Mammary epithelial cell (primary cell): ENCODE measurements at regions of chr10 and their contacts with region 1.

Region 1: GRCh38 chr10:52883996-52884871 is 111.7 kb upstream of the MBL2 start:
- DNase-seq: peak; percentile 97
- H3K4me3 ChIP-seq: peak overlapping the region; percentile 35 to 54 (median 49)
- H3K27ac ChIP-seq: peak overlapping the region; percentile 81
- H3K4me1 ChIP-seq: peaks cover 23% of the 10 kb centered on the region
- H3K27me3 ChIP-seq: no peaks in the 10 kb centered on the region
- CTCF ChIP-seq: peak; percentile 86 to 87

Region 2: GRCh38 chr10:52864201-52865106 is 19.8 kb before region 1 on chr10:
- CTCF ChIA-PET with region 1: no interaction called
- dilution Hi-C with region 1: no loop called
- in situ Hi-C with region 1: no loop called
- intact Hi-C with region 1: loop called (anchors 2 kb)
- DNase-seq: peak; percentile 98
- H3K4me3 ChIP-seq: no peak overlapping the region
- H3K27ac ChIP-seq: peak overlapping the region; percentile 31
- H3K4me1 ChIP-seq: peaks cover 24% of the 10 kb centered on the region
- H3K27me3 ChIP-seq: no peaks in the 10 kb centered on the region
- CTCF ChIP-seq: no peak

Region 3: DNA sequence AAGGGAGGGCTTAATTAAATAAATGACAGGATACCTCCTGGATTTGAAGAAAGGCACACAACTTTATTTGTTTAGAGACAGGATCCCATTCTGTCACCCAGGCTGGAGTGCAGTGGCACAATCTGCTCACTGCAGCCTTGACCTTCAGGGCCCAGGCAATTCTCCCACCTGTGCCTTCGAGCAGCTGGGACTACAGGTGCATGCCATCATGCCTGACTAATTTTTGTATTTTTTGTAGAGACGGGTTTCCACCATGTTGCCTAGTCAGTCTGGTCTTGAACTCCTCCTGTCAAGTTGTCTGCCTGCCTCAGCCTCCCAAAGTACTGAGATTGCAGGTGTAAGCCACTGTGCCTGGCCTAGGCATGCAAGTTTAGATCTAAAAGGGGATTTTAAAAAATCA is 161.1 kb after region 1 on chr10:
- CTCF ChIA-PET with region 1: no interaction called
- dilution Hi-C with region 1: no loop called
- in situ Hi-C with region 1: no loop called
- intact Hi-C with region 1: no loop called
- DNase-seq: no peak
- H3K4me3 ChIP-seq: no peak overlapping the region
- H3K27ac ChIP-seq: no peak overlapping the region
- H3K4me1 ChIP-seq: no peaks in the 10 kb centered on the region
- H3K27me3 ChIP-seq: no peaks in the 10 kb centered on the region
- CTCF ChIP-seq: no peak

Region 4: GRCh38 chr10:53209944-53210611 is 325.8 kb after region 1 on chr10:
- CTCF ChIA-PET with region 1: no interaction called
- dilution Hi-C with region 1: no loop called
- in situ Hi-C with region 1: no loop called
- intact Hi-C with region 1: loop called (anchors 1 kb)
- DNase-seq: peak; percentile 39
- H3K4me3 ChIP-seq: no peak overlapping the region
- H3K27ac ChIP-seq: no peak overlapping the region
- H3K4me1 ChIP-seq: no peaks in the 10 kb centered on the region
- H3K27me3 ChIP-seq: no peaks in the 10 kb centered on the region
- CTCF ChIP-seq: peak; percentile 64 to 66

Region 5: GRCh38 chr10:53601260-53601875 is 717.1 kb after region 1 on chr10:
- CTCF ChIA-PET with region 1: no interaction called
- dilution Hi-C with region 1: no loop called
- in situ Hi-C with region 1: no loop called
- intact Hi-C with region 1: loop called (anchors 1 kb)
- DNase-seq: peak; percentile 16
- H3K4me3 ChIP-seq: no peak overlapping the region
- H3K27ac ChIP-seq: no peak overlapping the region
- H3K4me1 ChIP-seq: peaks cover 21% of the 10 kb centered on the region
- H3K27me3 ChIP-seq: no peaks in the 10 kb centered on the region
- CTCF ChIP-seq: peak; percentile 84 to 88

Region 6: DNA sequence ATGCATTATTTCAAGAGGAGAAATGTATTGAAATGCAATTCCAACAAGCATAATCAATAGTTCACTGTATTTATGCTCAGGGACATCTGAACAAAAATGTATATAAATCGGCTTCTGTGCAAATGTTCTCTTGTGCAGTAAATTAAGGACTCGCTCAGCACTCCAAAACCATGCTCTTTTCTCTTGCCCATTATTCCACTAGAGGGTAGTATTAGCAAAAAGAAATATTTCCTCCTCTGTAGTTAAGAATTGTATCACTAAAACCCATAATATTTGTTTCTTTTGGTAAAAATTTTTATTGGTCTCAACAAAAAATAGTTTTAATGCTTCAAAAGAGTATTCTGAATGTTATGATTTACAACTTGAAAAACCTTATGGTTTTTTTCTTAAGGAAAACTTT is 1113.7 kb after region 1 on chr10:
- CTCF ChIA-PET with region 1: no interaction called
- dilution Hi-C with region 1: no loop called
- in situ Hi-C with region 1: no loop called
- intact Hi-C with region 1: loop called (anchors 5 kb)
- DNase-seq: peak; percentile 0
- H3K4me3 ChIP-seq: no peak overlapping the region
- H3K27ac ChIP-seq: no peak overlapping the region
- H3K4me1 ChIP-seq: no peaks in the 10 kb centered on the region
- H3K27me3 ChIP-seq: no peaks in the 10 kb centered on the region
- CTCF ChIP-seq: peak in 1 of 2 donors; percentile 44